Endothelial cell of umbilical vein (primary cell): ENCODE measurements at regions of chr2 and their contacts with region 1.

Region 1: GRCh38 chr2:113248997-113249770 is 29.5 kb downstream of the PAX8 start:
- DNase-seq: peak; percentile 67
- H3K4me3 ChIP-seq: no peak overlapping the region
- H3K27ac ChIP-seq: no peak overlapping the region
- H3K4me1 ChIP-seq: no peaks in the 10 kb centered on the region
- H3K27me3 ChIP-seq: no peaks in the 10 kb centered on the region
- CTCF ChIP-seq: peak; percentile 90 to 91
- POLR2A ChIP-seq: no peak

Region 2: GRCh38 chr2:112714836-112715631 is 534.1 kb before region 1 on chr2:
- CTCF ChIA-PET with region 1: no interaction called
- POLR2A ChIA-PET with region 1: no interaction called
- dilution Hi-C with region 1: no loop called
- intact Hi-C with region 1: no loop called
- DNase-seq: no peak
- H3K4me3 ChIP-seq: no peak overlapping the region
- H3K27ac ChIP-seq: no peak overlapping the region
- H3K4me1 ChIP-seq: no peaks in the 10 kb centered on the region
- H3K27me3 ChIP-seq: peaks cover 0 to 7% of the 10 kb centered on the region in 2 experiments
- CTCF ChIP-seq: no peak
- POLR2A ChIP-seq: no peak

Region 3: GRCh38 chr2:112920923-112921532 is 328.2 kb before region 1 on chr2:
- CTCF ChIA-PET with region 1: no interaction called
- POLR2A ChIA-PET with region 1: no interaction called
- dilution Hi-C with region 1: no loop called
- intact Hi-C with region 1: no loop called
- DNase-seq: no peak
- H3K4me3 ChIP-seq: no peak overlapping the region
- H3K27ac ChIP-seq: no peak overlapping the region
- H3K4me1 ChIP-seq: no peaks in the 10 kb centered on the region
- H3K27me3 ChIP-seq: peaks cover 17% of the 10 kb centered on the region in 2 experiments
- CTCF ChIP-seq: no peak
- POLR2A ChIP-seq: no peak

Region 4: GRCh38 chr2:113370478-113371091 is 121.4 kb after region 1 on chr2:
- CTCF ChIA-PET with region 1: interaction called, 40 read pairs
- POLR2A ChIA-PET with region 1: no interaction called
- dilution Hi-C with region 1: no loop called
- intact Hi-C with region 1: loop called (anchors 1 kb)
- DNase-seq: peak; percentile 61
- H3K4me3 ChIP-seq: no peak overlapping the region
- H3K27ac ChIP-seq: no peak overlapping the region
- H3K4me1 ChIP-seq: no peaks in the 10 kb centered on the region
- H3K27me3 ChIP-seq: no peaks in the 10 kb centered on the region
- CTCF ChIP-seq: peak; percentile 44 to 50
- POLR2A ChIP-seq: no peak

Region 5: GRCh38 chr2:113390124-113390849 is 141.1 kb after region 1 on chr2:
- CTCF ChIA-PET with region 1: interaction called, 39 read pairs
- POLR2A ChIA-PET with region 1: no interaction called
- dilution Hi-C with region 1: no loop called
- intact Hi-C with region 1: loop called (anchors 1 kb)
- DNase-seq: peak; percentile 90
- H3K4me3 ChIP-seq: no peak overlapping the region
- H3K27ac ChIP-seq: no peak overlapping the region
- H3K4me1 ChIP-seq: no peaks in the 10 kb centered on the region
- H3K27me3 ChIP-seq: peaks cover 2 to 6% of the 10 kb centered on the region in 2 experiments
- CTCF ChIP-seq: peak; percentile 57 to 80
- POLR2A ChIP-seq: no peak